IMR-90 (cell line): ENCODE measurements at regions of chr4 and their contacts with region 1.

Region 1: GRCh38 chr4:104559502-104559901 is 64.8 kb upstream of the CXXC4 start:
- DNase-seq: no peak
- ATAC-seq: no peak
- H3K4me3 ChIP-seq: no peak overlapping the region
- H3K27ac ChIP-seq: no peak overlapping the region
- H3K4me1 ChIP-seq: no peaks in the 10 kb centered on the region
- H3K27me3 ChIP-seq: no peaks in the 10 kb centered on the region
- CTCF ChIP-seq: no peak
- POLR2A ChIP-seq: no peak
- RAD21 ChIP-seq: no peak

Region 2: DNA sequence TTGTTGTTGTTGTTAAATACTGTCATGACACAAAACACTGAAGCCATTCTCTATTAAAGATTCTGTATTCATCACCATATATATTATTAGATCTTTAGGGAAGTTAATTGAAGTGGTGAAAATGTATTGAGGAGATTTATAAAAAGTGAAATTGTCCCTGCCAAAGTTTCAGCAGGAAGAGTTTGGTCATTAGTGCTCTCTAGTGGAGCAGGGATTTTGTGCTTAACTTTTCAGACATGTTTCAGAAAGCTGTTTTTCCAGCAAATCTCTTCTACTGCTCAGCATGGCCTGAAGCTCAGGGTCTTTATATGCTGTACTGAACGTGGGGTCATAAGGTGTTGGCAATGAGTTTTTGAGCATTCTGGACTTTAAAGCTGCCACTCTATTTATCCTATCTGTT is 28.1 kb before region 1 on chr4:
- CTCF ChIA-PET with region 1: no interaction called
- POLR2A ChIA-PET with region 1: no interaction called
- dilution Hi-C with region 1: no loop called
- in situ Hi-C with region 1: no loop called
- intact Hi-C with region 1: loop called (anchors 1 kb)
- DNase-seq: no peak
- ATAC-seq: no peak
- H3K4me3 ChIP-seq: no peak overlapping the region
- H3K27ac ChIP-seq: no peak overlapping the region
- H3K4me1 ChIP-seq: no peaks in the 10 kb centered on the region
- H3K27me3 ChIP-seq: no peaks in the 10 kb centered on the region
- CTCF ChIP-seq: no peak
- POLR2A ChIP-seq: no peak
- RAD21 ChIP-seq: no peak

Region 3: GRCh38 chr4:104719539-104720230 is 160.2 kb after region 1 on chr4:
- CTCF ChIA-PET with region 1: no interaction called
- POLR2A ChIA-PET with region 1: no interaction called
- dilution Hi-C with region 1: no loop called
- in situ Hi-C with region 1: no loop called
- intact Hi-C with region 1: no loop called
- DNase-seq: no peak
- ATAC-seq: no peak
- H3K4me3 ChIP-seq: no peak overlapping the region
- H3K27ac ChIP-seq: no peak overlapping the region
- H3K4me1 ChIP-seq: no peaks in the 10 kb centered on the region
- H3K27me3 ChIP-seq: no peaks in the 10 kb centered on the region
- CTCF ChIP-seq: no peak
- POLR2A ChIP-seq: no peak
- RAD21 ChIP-seq: no peak